ENCODE measurements at regions of chr10 and their contacts with region 1.

Region 1: GRCh38 chr10:49300140-49300974 is 1.4 kb downstream of the C10orf71 start:
- DNase-seq: peak; percentile 74 to 97 (median 84)
- ATAC-seq: peak; percentile 82
- H3K4me3 ChIP-seq: peak overlapping the region; percentile 38
- H3K27ac ChIP-seq: peak overlapping the region; percentile 94
- H3K4me1 ChIP-seq: peaks cover 42 to 60% of the 10 kb centered on the region in 2 experiments
- H3K27me3 ChIP-seq: no peaks in the 10 kb centered on the region
- CTCF ChIP-seq: peak; percentile 55 to 74 (median 65)
- EP300 ChIP-seq: peak; percentile 93
- POLR2A ChIP-seq: peak; percentile 56; the same call in 1 of the 2 replicates
- RAD21 ChIP-seq: peak; percentile 75 to 78

Region 2: GRCh38 chr10:49177391-49178355 is 122.7 kb before region 1 on chr10:
- CTCF ChIA-PET with region 1: interaction called, 3 read pairs
- POLR2A ChIA-PET with region 1: interaction called, 4 read pairs
- in situ Hi-C with region 1: no loop called
- intact Hi-C with region 1: loop called (anchors 2 kb)
- DNase-seq: peak; percentile 53 to 88 (median 67)
- ATAC-seq: peak; percentile 36
- H3K4me3 ChIP-seq: no peak overlapping the region
- H3K27ac ChIP-seq: peak overlapping the region; percentile 84
- H3K4me1 ChIP-seq: peaks cover 74 to 100% of the 10 kb centered on the region in 2 experiments
- H3K27me3 ChIP-seq: no peaks in the 10 kb centered on the region
- CTCF ChIP-seq: no peak
- EP300 ChIP-seq: peak; percentile 64; the same call in 1 of the 2 replicates
- POLR2A ChIP-seq: peak; percentile 32; the same call in 1 of the 2 replicates
- RAD21 ChIP-seq: no peak; a peak in 1 of 4 replicates

Region 3: GRCh38 chr10:49218480-49218879 is 81.9 kb before region 1 on chr10:
- CTCF ChIA-PET with region 1: no interaction called
- POLR2A ChIA-PET with region 1: no interaction called
- in situ Hi-C with region 1: no loop called
- intact Hi-C with region 1: loop called (anchors 5 kb)
- DNase-seq: peak in 2 of 4 experiments; percentile 43 to 48
- ATAC-seq: peak; percentile 86
- H3K4me3 ChIP-seq: no peak overlapping the region
- H3K27ac ChIP-seq: no peak overlapping the region
- H3K4me1 ChIP-seq: peaks cover 4 to 9% of the 10 kb centered on the region in 2 experiments; a peak in 3 of 5 replicates
- H3K27me3 ChIP-seq: no peaks in the 10 kb centered on the region
- CTCF ChIP-seq: peak; percentile 37 to 54 (median 47)
- EP300 ChIP-seq: no peak
- POLR2A ChIP-seq: no peak
- RAD21 ChIP-seq: peak; percentile 21 to 60; a peak in 2 of 4 replicates

Region 4: GRCh38 chr10:49314806-49315205 is 14.4 kb after region 1 on chr10:
- CTCF ChIA-PET with region 1: no interaction called
- POLR2A ChIA-PET with region 1: interaction called, 12 read pairs
- in situ Hi-C with region 1: no loop called
- intact Hi-C with region 1: no loop called
- DNase-seq: no peak
- ATAC-seq: no peak
- H3K4me3 ChIP-seq: no peak overlapping the region
- H3K27ac ChIP-seq: no peak overlapping the region
- H3K4me1 ChIP-seq: peaks cover 0 to 3% of the 10 kb centered on the region in 2 experiments; a peak in 2 of 5 replicates
- H3K27me3 ChIP-seq: no peaks in the 10 kb centered on the region
- CTCF ChIP-seq: no peak
- EP300 ChIP-seq: no peak
- POLR2A ChIP-seq: no peak
- RAD21 ChIP-seq: no peak

Region 5: DNA sequence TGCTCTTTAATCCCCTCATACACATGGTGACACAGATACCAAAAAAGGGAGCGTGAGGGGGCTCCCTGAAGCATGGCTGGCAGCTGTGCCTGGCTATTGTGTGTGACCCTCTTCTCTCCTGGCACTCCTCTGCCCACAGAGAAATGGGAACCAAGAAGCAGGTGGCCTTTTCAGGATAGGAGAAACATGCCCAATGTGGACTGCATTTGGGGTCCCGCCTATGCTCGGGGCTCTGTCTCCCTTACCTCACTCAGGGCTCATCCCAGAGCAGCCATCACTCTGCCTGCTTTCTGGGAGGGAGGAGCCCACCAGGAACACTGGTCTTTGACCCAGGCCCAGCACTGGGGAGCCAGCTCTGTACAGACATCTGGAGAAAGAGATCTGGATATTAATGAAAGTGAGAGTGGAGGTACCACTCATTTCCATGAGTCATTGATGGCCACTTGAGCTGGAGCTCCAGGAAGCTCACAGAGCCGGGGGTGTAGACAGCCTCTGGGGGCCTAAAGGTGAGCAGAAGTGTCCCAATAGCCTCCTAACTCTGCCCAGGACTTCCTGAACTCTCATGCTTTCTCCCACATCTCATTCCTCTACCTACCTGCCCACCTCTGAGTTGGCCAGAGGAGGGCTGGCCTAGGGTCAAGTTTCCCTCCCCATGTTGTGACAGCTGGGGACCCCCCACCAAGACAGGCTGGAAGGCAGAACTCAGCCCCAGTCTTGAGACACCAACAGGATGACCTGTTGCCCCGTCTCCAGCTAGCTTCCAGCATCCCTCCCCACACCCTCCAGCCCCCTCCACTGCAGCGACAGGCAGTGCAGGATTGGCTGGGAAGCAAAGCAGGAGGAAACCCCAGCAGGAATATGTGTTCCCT is 52.9 kb after region 1 on chr10:
- CTCF ChIA-PET with region 1: no interaction called
- POLR2A ChIA-PET with region 1: no interaction called
- in situ Hi-C with region 1: no loop called
- intact Hi-C with region 1: no loop called
- DNase-seq: no peak
- ATAC-seq: no peak; the same call in 2 of the 3 replicates
- H3K4me3 ChIP-seq: no peak overlapping the region
- H3K27ac ChIP-seq: no peak overlapping the region
- H3K4me1 ChIP-seq: no peaks in the 10 kb centered on the region
- H3K27me3 ChIP-seq: peaks cover 3 to 24% of the 10 kb centered on the region in 2 experiments; a peak in 2 of 5 replicates
- CTCF ChIP-seq: no peak
- EP300 ChIP-seq: no peak
- POLR2A ChIP-seq: no peak
- RAD21 ChIP-seq: no peak

Region 6: GRCh38 chr10:49441488-49442476 is 141.4 kb after region 1 on chr10:
- CTCF ChIA-PET with region 1: no interaction called
- POLR2A ChIA-PET with region 1: no interaction called
- in situ Hi-C with region 1: no loop called
- intact Hi-C with region 1: no loop called
- DNase-seq: no peak
- ATAC-seq: no peak
- H3K4me3 ChIP-seq: no peak overlapping the region
- H3K27ac ChIP-seq: no peak overlapping the region
- H3K4me1 ChIP-seq: peaks cover 0 to 9% of the 10 kb centered on the region in 2 experiments; a peak in 3 of 5 replicates
- H3K27me3 ChIP-seq: peaks cover 19 to 20% of the 10 kb centered on the region in 2 experiments
- CTCF ChIP-seq: no peak
- EP300 ChIP-seq: no peak
- POLR2A ChIP-seq: no peak
- RAD21 ChIP-seq: no peak

Region 7: GRCh38 chr10:50367732-50368131 is 1067.4 kb after region 1 on chr10:
- CTCF ChIA-PET with region 1: no interaction called
- POLR2A ChIA-PET with region 1: no interaction called
- in situ Hi-C with region 1: no loop called
- intact Hi-C with region 1: no loop called
- DNase-seq: peak; percentile 51 to 69 (median 58)
- ATAC-seq: peak; percentile 75
- H3K4me3 ChIP-seq: no peak overlapping the region
- H3K27ac ChIP-seq: no peak overlapping the region
- H3K4me1 ChIP-seq: peaks cover 4 to 28% of the 10 kb centered on the region in 2 experiments; a peak in 4 of 5 replicates
- H3K27me3 ChIP-seq: no peaks in the 10 kb centered on the region
- CTCF ChIP-seq: peak; percentile 44 to 64 (median 61); a peak in 5 of 6 replicates
- EP300 ChIP-seq: no peak
- POLR2A ChIP-seq: no peak
- RAD21 ChIP-seq: peak; percentile 58 to 75